H1 (cell line): ENCODE measurements at regions of chr7 and their contacts with region 1.

Region 1: DNA sequence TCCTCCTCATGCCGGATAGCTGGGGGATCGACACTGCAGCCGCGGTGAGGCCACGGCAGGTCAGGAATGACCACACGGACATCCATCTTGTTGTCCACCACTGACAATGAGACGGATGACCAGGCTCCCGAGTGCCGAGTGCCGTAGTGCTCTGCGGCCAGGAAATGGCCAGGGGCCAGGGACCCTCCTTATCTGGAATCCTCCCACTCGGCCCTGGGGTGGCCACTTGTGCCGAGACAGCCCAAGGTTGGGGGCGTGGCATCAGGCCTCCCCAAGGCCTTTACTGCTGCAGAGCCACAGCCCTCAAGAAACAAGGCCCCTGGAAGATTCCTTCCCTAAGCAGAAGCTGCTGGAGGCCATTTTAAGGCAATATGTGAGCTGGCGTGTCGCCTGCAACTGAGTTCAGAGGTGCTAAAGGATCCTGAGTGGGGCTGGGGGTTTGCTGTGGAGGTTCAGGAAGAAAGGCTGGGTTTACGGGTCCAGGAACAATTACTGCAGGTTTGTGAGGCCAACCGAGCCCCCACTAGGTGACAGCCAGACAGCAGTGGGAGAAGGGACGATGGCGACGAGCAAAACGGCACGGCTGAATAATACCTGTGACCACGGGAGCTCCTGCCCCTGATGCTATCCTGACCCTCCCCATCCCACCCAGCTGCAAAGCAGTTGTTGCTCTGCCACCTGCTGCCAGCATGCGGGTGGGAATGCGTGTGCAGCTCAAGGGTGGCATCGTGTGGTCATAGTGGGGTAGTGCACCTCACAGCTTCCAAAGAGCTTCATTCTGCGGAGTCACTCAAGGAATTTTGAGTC is 31.6 kb upstream of the LEP start:
- DNase-seq: peak; percentile 53 to 82
- H3K4me3 ChIP-seq: no peak overlapping the region
- H3K27ac ChIP-seq: no peak overlapping the region
- H3K4me1 ChIP-seq: peaks cover 6 to 16% (median 7%) of the 10 kb centered on the region in 4 experiments; a peak in 6 of 7 replicates
- H3K27me3 ChIP-seq: peaks cover 0 to 10% (median 5%) of the 10 kb centered on the region in 4 experiments; a peak in 3 of 7 replicates
- CTCF ChIP-seq: peak; percentile 99 to 100 (median 100)
- EP300 ChIP-seq: no peak
- POLR2A ChIP-seq: no peak
- RAD21 ChIP-seq: peak; percentile 100

Region 2: GRCh38 chr7:127708788-127709187 is 500.6 kb before region 1 on chr7:
- CTCF ChIA-PET with region 1: interaction called, 68 read pairs
- POLR2A ChIA-PET with region 1: no interaction called
- DNase-seq: peak in 1 of 2 experiments; percentile 79
- H3K4me3 ChIP-seq: no peak overlapping the region
- H3K27ac ChIP-seq: no peak overlapping the region
- H3K4me1 ChIP-seq: no peaks in the 10 kb centered on the region
- H3K27me3 ChIP-seq: no peaks in the 10 kb centered on the region
- CTCF ChIP-seq: peak in 2 of 3 experiments; percentile 74 to 81; a peak in 3 of 4 replicates
- EP300 ChIP-seq: no peak
- POLR2A ChIP-seq: no peak
- RAD21 ChIP-seq: peak; percentile 91 to 94

Region 3: GRCh38 chr7:128053023-128053422 is 156.4 kb before region 1 on chr7:
- CTCF ChIA-PET with region 1: interaction called, 69 read pairs
- POLR2A ChIA-PET with region 1: no interaction called
- DNase-seq: no peak
- H3K4me3 ChIP-seq: no peak overlapping the region
- H3K27ac ChIP-seq: no peak overlapping the region
- H3K4me1 ChIP-seq: no peaks in the 10 kb centered on the region
- H3K27me3 ChIP-seq: no peaks in the 10 kb centered on the region
- CTCF ChIP-seq: no peak
- EP300 ChIP-seq: no peak
- POLR2A ChIP-seq: no peak
- RAD21 ChIP-seq: no peak

Region 4: GRCh38 chr7:128115391-128116332 is 93.8 kb before region 1 on chr7:
- CTCF ChIA-PET with region 1: interaction called, 63 read pairs
- POLR2A ChIA-PET with region 1: interaction called, 3 read pairs
- DNase-seq: peak in 1 of 2 experiments; percentile 40
- H3K4me3 ChIP-seq: no peak overlapping the region
- H3K27ac ChIP-seq: no peak overlapping the region
- H3K4me1 ChIP-seq: peaks cover 0 to 9% (median 4%) of the 10 kb centered on the region in 4 experiments; a peak in 4 of 7 replicates
- H3K27me3 ChIP-seq: peaks cover 2 to 14% (median 6%) of the 10 kb centered on the region in 4 experiments; a peak in 4 of 7 replicates
- CTCF ChIP-seq: no peak
- EP300 ChIP-seq: peak in 1 of 2 experiments; percentile 26; a peak in 1 of 3 replicates
- POLR2A ChIP-seq: no peak
- RAD21 ChIP-seq: no peak

Region 5: GRCh38 chr7:128145191-128145590 is 64.2 kb before region 1 on chr7:
- CTCF ChIA-PET with region 1: interaction called, 37 read pairs
- POLR2A ChIA-PET with region 1: no interaction called
- DNase-seq: peak in 1 of 2 experiments; percentile 20
- H3K4me3 ChIP-seq: no peak overlapping the region
- H3K27ac ChIP-seq: no peak overlapping the region
- H3K4me1 ChIP-seq: no peaks in the 10 kb centered on the region
- H3K27me3 ChIP-seq: no peaks in the 10 kb centered on the region; a peak in 1 of 7 replicates
- CTCF ChIP-seq: no peak
- EP300 ChIP-seq: no peak
- POLR2A ChIP-seq: no peak
- RAD21 ChIP-seq: no peak

Region 6: DNA sequence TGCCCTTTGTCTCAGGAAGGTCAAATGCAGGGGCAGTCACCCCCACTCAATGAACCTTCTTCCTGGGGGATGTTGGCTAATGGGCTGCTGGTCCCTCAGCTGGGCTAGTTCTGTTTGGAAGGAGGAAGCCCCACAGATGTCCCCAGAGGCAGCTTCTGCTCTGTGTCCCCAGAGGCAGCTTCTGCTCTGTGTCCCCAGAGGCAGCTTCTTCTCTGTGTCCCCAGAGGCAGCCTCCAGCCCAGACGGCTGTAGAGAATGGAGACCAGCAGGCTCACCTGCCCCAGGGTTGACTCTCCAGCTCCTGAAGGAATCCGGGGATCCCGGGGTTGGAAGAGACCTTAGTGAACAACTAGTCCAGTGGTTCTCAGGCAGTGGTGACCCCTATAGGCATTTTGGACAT is 30.8 kb before region 1 on chr7:
- CTCF ChIA-PET with region 1: interaction called, 131 read pairs
- POLR2A ChIA-PET with region 1: no interaction called
- DNase-seq: no peak
- H3K4me3 ChIP-seq: no peak overlapping the region
- H3K27ac ChIP-seq: no peak overlapping the region
- H3K4me1 ChIP-seq: peaks cover 0 to 6% (median 0%) of the 10 kb centered on the region in 4 experiments; a peak in 1 of 7 replicates
- H3K27me3 ChIP-seq: no peaks in the 10 kb centered on the region; a peak in 2 of 7 replicates
- CTCF ChIP-seq: no peak
- EP300 ChIP-seq: no peak
- POLR2A ChIP-seq: no peak
- RAD21 ChIP-seq: no peak

Region 7: GRCh38 chr7:128231021-128231420 is 21.6 kb after region 1 on chr7:
- CTCF ChIA-PET with region 1: interaction called, 24 read pairs
- POLR2A ChIA-PET with region 1: no interaction called
- DNase-seq: no peak
- H3K4me3 ChIP-seq: no peak overlapping the region
- H3K27ac ChIP-seq: no peak overlapping the region
- H3K4me1 ChIP-seq: peaks cover 0 to 11% (median 4%) of the 10 kb centered on the region in 4 experiments; a peak in 4 of 7 replicates
- H3K27me3 ChIP-seq: no peaks in the 10 kb centered on the region
- CTCF ChIP-seq: no peak
- EP300 ChIP-seq: no peak
- POLR2A ChIP-seq: no peak
- RAD21 ChIP-seq: no peak